GM13976 (cell line): ENCODE measurements at regions of chr2 and their contacts with region 1.

Region 1: GRCh38 chr2:168920504-168921157 is 19.5 kb downstream of the G6PC2 start:
- DNase-seq: peak; percentile 45
- CTCF ChIP-seq: peak; percentile 29

Region 2: DNA sequence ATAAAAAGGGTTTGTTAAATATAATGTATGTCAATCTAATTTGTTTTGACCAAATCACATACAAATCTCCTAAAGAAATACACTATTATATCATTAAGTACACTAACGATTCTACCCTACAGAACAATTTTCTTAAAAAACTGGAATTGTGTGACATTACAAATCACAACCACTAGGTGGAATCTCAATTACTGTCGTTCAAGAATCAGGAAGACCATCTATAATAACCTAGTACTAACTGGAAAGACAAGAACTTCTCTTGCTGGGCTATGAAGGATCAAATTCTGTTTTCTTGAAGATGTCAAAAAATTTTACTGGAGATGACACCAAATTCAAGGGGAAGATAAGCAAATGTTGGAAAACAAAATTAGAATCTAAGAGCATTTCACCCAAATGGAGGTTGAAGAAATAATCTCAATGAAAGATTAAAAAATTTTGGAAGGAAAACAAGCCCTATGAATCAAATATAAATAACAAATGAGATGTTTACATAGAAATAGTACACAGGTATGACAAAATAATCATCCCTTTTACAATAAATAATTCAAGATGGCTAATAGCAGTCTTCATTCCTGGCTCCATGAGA is 784.1 kb before region 1 on chr2:
- in situ Hi-C with region 1: loop called (anchors 25 kb)
- DNase-seq: peak; percentile 8
- CTCF ChIP-seq: peak; percentile 17

Region 3: GRCh38 chr2:168583064-168583709 is 337.4 kb before region 1 on chr2:
- in situ Hi-C with region 1: no loop called
- DNase-seq: peak; percentile 28
- CTCF ChIP-seq: no peak